Dendritic cell treated with granulocyte-macrophage colony-stimulating factor and Interleukin-4, amounts not matched to agents 40 ng/mL and 50 ng/mL, for 4 days (primary cell): ENCODE measurements at regions of chr2 and their contacts with region 1.

Region 1: DNA sequence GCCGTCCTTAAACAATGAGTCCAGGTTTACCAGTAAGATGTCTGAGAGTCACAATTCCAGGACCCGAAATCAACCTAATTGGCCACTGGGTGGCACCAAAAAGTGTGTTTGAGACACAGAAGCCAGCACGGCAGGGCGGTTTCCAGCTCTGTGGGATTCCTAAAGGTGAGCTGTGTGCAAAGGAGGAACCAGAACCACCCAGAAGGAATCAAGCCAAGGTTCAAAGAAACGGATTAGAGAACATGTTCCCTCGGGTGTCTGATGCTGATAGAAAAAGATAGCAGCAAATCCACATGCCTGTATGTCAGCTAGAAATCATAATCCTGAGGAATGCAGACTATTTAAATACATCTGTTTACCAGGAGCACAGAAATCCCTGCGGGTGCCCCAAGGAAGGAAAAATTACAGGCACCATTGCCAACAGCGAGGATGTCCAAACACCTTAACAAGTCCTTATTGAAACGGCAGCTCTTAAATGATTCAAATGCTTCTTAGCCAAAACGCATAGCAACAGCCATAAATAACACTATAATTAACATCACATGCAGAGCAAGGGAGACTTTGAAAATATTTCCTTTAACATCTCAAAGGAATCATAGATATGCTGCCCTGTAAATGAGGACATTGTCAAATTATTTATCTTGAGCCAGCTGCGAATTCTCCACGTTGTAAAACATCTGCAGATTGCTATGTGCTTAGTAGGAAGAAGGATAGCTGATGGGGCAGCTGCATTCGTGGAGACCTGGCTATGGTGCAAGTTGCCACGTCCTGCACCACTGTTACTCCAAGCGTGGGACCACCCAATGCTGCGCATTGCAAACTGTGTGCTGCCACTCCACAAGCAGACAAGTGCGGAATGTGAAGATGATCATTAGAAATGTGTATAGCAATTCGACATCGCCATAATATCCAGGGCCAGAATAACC is 318.7 kb upstream of the NCKAP5 start:
- H3K4me3 Mint-ChIP-seq: no peak overlapping the region
- H3K27ac Mint-ChIP-seq: no peak overlapping the region
- H3K4me1 Mint-ChIP-seq: peaks cover 5% of the 10 kb centered on the region
- H3K27me3 Mint-ChIP-seq: peaks cover 2% of the 10 kb centered on the region

Region 2: GRCh38 chr2:133652398-133652797 is 234.6 kb before region 1 on chr2:
- intact Hi-C with region 1: no loop called
- H3K4me3 Mint-ChIP-seq: no peak overlapping the region
- H3K27ac Mint-ChIP-seq: no peak overlapping the region
- H3K4me1 Mint-ChIP-seq: no peaks in the 10 kb centered on the region
- H3K27me3 Mint-ChIP-seq: no peaks in the 10 kb centered on the region

Region 3: GRCh38 chr2:134104754-134105153 is 217.8 kb after region 1 on chr2:
- intact Hi-C with region 1: loop called (anchors 5 kb)
- H3K4me3 Mint-ChIP-seq: no peak overlapping the region
- H3K27ac Mint-ChIP-seq: no peak overlapping the region
- H3K4me1 Mint-ChIP-seq: peaks cover 26% of the 10 kb centered on the region
- H3K27me3 Mint-ChIP-seq: no peaks in the 10 kb centered on the region

Region 4: GRCh38 chr2:134411828-134412638 is 525.0 kb after region 1 on chr2:
- intact Hi-C with region 1: loop called (anchors 5 kb)
- H3K4me3 Mint-ChIP-seq: no peak overlapping the region
- H3K27ac Mint-ChIP-seq: no peak overlapping the region
- H3K4me1 Mint-ChIP-seq: peaks cover 15% of the 10 kb centered on the region
- H3K27me3 Mint-ChIP-seq: no peaks in the 10 kb centered on the region

Region 5: GRCh38 chr2:134451347-134451630 is 564.3 kb after region 1 on chr2:
- intact Hi-C with region 1: loop called (anchors 2 kb)
- H3K4me3 Mint-ChIP-seq: no peak overlapping the region
- H3K27ac Mint-ChIP-seq: no peak overlapping the region
- H3K4me1 Mint-ChIP-seq: no peaks in the 10 kb centered on the region
- H3K27me3 Mint-ChIP-seq: no peaks in the 10 kb centered on the region

Region 6: DNA sequence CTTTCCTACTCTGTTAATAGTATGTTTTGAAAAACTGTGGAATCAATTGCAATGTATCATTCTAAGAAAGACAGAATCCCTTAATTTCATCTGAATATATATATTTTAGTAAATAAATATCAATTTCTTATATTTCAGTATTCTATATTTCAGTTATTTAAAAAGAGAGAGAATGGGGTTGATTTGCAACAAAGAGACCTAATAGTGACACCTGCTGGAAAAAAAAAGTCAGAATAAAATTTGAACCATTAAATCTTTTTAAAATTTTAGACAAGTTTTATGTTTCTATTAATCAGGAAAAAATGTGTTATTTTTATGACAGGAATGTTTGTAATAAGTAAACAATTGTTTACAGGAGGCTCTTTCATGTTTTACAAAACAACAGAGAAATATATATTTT is 1010.9 kb after region 1 on chr2:
- intact Hi-C with region 1: loop called (anchors 5 kb)
- H3K4me3 Mint-ChIP-seq: no peak overlapping the region
- H3K27ac Mint-ChIP-seq: no peak overlapping the region
- H3K4me1 Mint-ChIP-seq: peaks cover under 1% of the 10 kb centered on the region
- H3K27me3 Mint-ChIP-seq: no peaks in the 10 kb centered on the region